Activated CD4-positive, alpha-beta memory T cell treated with anti-CD3 and anti-CD28 coated beads for 36 hours (primary cell): ENCODE measurements at regions of chr12 and their contacts with region 1.

Region 1: DNA sequence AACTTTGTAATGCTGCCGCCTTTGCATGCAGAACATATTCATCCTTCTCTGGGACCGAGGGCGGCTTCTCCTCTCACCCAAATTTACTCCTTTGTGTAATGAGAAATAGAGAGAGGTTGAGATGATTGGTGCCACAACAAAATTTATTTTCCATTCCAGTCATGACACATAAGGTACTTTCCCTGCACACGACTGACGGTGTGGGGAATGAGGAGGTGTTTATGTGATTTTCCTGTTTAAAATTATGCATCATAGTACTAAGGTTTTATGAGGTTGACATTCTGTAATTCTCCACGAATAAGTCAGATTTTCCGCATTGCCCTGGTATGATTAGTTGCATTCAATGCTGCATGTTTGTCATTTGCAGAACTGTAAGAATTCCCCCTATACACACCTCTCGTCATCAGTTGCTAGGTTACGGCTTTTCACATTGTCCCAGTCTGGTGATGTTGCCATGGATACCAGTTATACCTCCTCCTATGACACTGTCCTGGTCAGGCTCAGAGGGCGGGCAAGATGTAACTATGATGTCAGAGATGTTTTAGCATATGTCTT is 23.1 kb downstream of the BICDL1 start:
- DNase-seq: peak; percentile 88
- H3K4me3 Mint-ChIP-seq: peak overlapping the region; percentile 70
- H3K27ac Mint-ChIP-seq: peak overlapping the region; percentile 96
- H3K4me1 Mint-ChIP-seq: peaks cover 88% of the 10 kb centered on the region
- H3K27me3 Mint-ChIP-seq: peaks cover 2% of the 10 kb centered on the region

Region 2: DNA sequence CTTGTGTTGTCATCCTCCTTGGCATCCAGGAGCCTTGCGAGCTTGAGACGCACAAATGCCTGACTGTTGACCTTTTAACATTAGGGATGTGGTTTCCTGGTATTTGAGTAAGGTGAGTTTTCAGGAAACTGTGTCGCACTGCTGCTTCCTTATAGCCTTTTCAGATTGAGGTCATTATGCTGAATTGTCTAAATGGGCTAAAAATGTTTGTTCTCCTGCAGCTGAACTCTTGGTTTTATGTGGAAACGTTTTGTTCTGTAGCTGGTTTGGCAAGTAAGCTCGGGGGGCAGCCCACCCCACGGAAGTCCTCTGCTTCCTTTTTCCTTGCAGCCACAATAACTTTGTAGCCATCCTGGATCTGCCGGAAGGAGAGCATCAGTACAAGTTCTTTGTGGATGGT is 338.5 kb before region 1 on chr12:
- CTCF ChIA-PET with region 1: no interaction called
- POLR2A ChIA-PET with region 1: no interaction called
- intact Hi-C with region 1: loop called (anchors 5 kb)
- DNase-seq: peak; percentile 36
- H3K4me3 Mint-ChIP-seq: no peak overlapping the region
- H3K27ac Mint-ChIP-seq: peak overlapping the region; percentile 92
- H3K4me1 Mint-ChIP-seq: peaks cover 59% of the 10 kb centered on the region
- H3K27me3 Mint-ChIP-seq: no peaks in the 10 kb centered on the region

Region 3: DNA sequence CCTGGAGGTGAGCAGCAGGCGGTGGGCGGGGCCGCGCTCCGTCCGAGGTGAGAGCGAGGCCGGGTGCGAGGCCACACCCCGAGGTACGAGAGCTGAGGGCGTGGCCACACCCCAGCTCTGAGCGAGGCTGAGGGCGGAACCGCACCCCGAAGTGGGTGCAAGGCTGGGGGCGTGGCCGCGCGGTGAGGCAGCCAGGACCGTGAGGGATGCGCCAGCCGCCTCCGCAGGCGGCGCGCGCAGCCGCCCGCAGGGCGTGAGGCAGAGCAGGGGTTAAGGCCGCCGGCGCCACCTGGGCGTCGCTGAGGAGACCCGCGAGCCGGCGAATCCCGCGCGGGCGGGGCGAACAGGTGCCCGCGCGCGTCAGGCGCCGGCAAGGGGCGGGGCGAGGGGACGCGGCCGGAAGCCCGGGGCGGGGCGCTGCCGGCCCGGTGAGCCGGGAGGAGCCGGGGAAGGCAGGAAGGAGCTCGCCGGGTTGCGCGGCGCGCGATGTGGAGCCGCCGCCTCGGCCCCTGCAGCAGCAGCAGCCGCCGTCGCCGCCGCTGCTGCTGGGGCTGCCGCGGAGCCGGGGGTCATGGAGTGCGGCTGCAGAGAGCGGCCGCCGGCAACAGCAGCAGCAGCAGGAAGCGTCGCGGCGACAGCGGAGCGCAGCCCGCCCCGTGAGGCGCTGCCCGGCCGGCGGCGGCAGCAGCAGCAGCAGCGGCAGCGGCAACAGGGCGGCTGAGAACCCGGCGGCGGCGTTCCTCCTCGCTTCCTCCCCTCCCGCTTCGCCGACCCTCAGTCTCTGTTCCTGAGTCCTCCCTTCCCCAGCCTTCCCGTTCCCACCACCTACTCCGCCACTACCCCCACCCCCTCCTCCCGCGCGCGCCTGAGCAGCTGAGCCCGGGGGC is 23.1 kb before region 1 on chr12 and contains the start of gene BICDL1:
- CTCF ChIA-PET with region 1: interaction called, 24 read pairs
- POLR2A ChIA-PET with region 1: interaction called, 209 read pairs
- intact Hi-C with region 1: loop called (anchors 1 kb)
- DNase-seq: peak; percentile 99
- H3K4me3 Mint-ChIP-seq: peak within 1 kb of the TSS; percentile 88
- H3K27ac Mint-ChIP-seq: peak within 1 kb of the TSS; percentile 91
- H3K4me1 Mint-ChIP-seq: peaks cover 43% of the 10 kb centered on the region
- H3K27me3 Mint-ChIP-seq: no peaks in the 10 kb centered on the region
- total RNA-seq, gene BICDL1: 143 to 155 TPM

Region 4: DNA sequence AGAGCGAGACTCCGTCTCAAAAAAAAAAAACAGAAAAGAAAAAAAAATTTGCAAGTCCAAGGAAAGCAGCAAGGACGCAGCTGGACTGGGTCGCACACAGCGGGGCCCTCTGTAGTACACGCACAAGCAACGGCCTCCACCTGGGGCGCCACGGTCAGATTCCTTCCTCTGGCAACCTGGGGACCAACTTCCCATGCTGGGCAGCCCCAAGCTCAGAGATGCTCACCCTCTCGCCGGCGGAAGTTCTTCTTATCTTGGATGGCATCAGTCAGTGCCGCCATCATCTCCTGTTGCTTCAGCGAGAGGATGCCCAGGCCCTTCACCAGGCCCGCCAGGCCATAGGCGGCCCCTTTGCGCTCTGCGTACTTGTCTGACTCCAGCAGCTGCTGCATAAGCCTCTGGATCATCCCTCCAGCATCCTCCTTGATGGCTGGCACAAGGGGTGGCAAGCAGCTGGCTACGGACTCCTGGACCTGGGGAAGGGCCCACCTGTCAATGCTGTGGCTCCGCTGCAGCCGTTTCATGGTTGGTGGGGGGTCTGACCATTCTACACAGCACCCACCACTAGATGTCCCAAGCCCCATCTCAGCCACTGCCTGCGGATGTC is 138.9 kb after region 1 on chr12:
- CTCF ChIA-PET with region 1: no interaction called
- POLR2A ChIA-PET with region 1: no interaction called
- intact Hi-C with region 1: no loop called
- DNase-seq: no peak
- H3K4me3 Mint-ChIP-seq: no peak overlapping the region
- H3K27ac Mint-ChIP-seq: no peak overlapping the region
- H3K4me1 Mint-ChIP-seq: no peaks in the 10 kb centered on the region
- H3K27me3 Mint-ChIP-seq: no peaks in the 10 kb centered on the region

Region 5: GRCh38 chr12:120194534-120195395 is 182.6 kb after region 1 on chr12 and contains the start of gene GCN1:
- CTCF ChIA-PET with region 1: no interaction called
- POLR2A ChIA-PET with region 1: interaction called, 6 read pairs
- intact Hi-C with region 1: loop called (anchors 1 kb)
- DNase-seq: peak; percentile 91
- H3K4me3 Mint-ChIP-seq: peak within 1 kb of the TSS; percentile 91
- H3K27ac Mint-ChIP-seq: peak within 1 kb of the TSS; percentile 98
- H3K4me1 Mint-ChIP-seq: peaks cover 51% of the 10 kb centered on the region
- H3K27me3 Mint-ChIP-seq: no peaks in the 10 kb centered on the region
- total RNA-seq, gene GCN1: 121 TPM

Region 6: DNA sequence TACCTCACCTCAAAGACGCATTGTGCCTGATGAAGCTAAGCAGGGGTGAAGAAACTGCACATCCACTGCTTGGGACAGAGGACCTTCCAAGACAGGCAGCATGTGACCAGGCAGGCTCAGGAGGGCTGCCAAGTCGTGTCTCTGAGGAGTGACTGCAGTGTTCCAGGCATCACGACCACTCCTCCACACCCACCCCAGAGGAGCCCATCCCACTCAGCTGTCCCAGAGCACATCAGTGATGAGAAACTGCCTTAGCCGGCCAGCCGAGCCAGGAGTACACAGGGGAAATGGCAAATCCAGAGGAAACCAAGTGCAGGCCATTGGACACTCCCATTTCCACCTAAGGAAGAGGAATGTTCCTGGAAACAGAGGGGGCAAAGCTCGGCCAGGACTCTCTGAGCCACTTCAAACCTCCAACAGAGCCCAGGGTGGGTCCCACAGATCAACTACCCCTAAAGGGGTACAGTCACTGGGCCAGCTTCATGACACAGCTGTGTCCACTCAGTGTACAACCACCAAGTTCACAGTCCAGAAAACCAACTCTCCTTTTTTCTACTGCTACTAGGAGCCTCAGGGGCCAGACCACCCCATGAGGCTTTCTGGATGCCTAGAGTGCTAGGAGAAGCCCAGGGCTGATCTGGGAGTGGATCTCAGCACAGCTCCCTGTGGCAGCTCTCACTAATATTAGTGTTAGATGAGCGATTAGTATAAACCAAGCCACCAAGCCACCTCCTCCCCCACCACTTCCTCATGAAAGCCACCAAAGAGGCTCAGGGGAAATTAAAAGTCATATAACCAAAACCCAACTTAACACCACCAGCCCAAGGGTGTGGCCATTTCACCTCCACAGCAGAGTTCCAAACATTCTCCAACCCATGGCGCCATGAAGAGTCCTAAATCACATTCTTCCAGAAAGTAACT is 238.0 kb after region 1 on chr12:
- CTCF ChIA-PET with region 1: no interaction called
- POLR2A ChIA-PET with region 1: no interaction called
- intact Hi-C with region 1: loop called (anchors 2 kb)
- DNase-seq: peak; percentile 64
- H3K4me3 Mint-ChIP-seq: peak overlapping the region; percentile 39
- H3K27ac Mint-ChIP-seq: peak overlapping the region; percentile 81
- H3K4me1 Mint-ChIP-seq: peaks cover 78% of the 10 kb centered on the region
- H3K27me3 Mint-ChIP-seq: no peaks in the 10 kb centered on the region